Activated B cell treated with CpG ODN at 0.5 μM for 24 hours (primary cell): ENCODE measurements at regions of chr1 and their contacts with region 1.

Region 1: GRCh38 chr1:197924516-197925123 is 7.4 kb downstream of the LHX9 start:
- DNase-seq: no peak
- ATAC-seq: peak; percentile 76
- H3K4me3 Mint-ChIP-seq: no peak overlapping the region
- H3K27ac Mint-ChIP-seq: no peak overlapping the region
- H3K4me1 Mint-ChIP-seq: peaks cover 19% of the 10 kb centered on the region
- H3K27me3 Mint-ChIP-seq: peaks cover 67% of the 10 kb centered on the region
- CTCF ChIP-seq: no peak

Region 2: GRCh38 chr1:197521118-197521739 is 403.4 kb before region 1 on chr1:
- CTCF ChIA-PET with region 1: interaction called, 13 read pairs
- POLR2A ChIA-PET with region 1: no interaction called
- intact Hi-C with region 1: loop called (anchors 1 kb)
- DNase-seq: no peak
- ATAC-seq: peak; percentile 42
- H3K4me3 Mint-ChIP-seq: no peak overlapping the region
- H3K27ac Mint-ChIP-seq: no peak overlapping the region
- H3K4me1 Mint-ChIP-seq: no peaks in the 10 kb centered on the region
- H3K27me3 Mint-ChIP-seq: no peaks in the 10 kb centered on the region
- CTCF ChIP-seq: peak; percentile 47

Region 3: DNA sequence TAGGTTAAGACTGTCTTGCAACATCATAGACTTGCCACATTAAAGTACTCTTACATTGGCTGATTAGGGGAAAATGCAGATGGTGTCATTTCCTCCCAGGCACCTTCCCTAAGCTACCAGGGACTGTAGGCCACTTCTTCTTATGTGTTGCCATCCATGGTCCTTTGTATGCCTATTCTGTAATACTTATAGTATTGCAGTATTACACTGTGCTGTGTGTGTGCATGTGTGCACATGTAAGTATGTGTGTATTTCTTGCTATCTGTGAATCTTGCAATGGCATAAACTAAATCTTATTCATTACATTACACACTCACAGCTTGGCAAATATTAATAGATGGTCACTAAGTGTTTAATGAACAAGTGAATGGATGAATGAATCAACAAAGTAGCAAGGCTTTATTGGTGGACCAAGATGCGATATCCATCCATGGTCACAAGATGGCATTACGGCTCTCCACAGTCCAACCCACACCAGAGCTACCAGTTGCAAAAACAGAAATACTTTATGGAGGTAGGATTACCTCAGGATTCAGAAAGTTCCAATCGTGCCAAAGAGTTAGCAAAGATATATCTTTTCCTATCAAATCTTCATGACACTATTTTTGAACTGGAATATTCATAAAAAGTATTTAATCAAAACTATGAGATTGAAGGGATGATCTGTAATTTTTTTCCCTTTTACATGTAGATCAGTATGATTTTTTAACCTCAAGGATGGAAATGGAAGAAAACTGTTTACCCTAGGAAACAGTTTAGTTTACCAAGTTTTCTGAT is 309.5 kb before region 1 on chr1:
- CTCF ChIA-PET with region 1: interaction called, 10 read pairs
- POLR2A ChIA-PET with region 1: interaction called, 4 read pairs
- intact Hi-C with region 1: loop called (anchors 1 kb)
- DNase-seq: no peak
- ATAC-seq: no peak
- H3K4me3 Mint-ChIP-seq: no peak overlapping the region
- H3K27ac Mint-ChIP-seq: no peak overlapping the region
- H3K4me1 Mint-ChIP-seq: no peaks in the 10 kb centered on the region
- H3K27me3 Mint-ChIP-seq: no peaks in the 10 kb centered on the region
- CTCF ChIP-seq: no peak

Region 4: GRCh38 chr1:197868751-197869489 is 55.7 kb before region 1 on chr1:
- CTCF ChIA-PET with region 1: interaction called, 8 read pairs
- POLR2A ChIA-PET with region 1: no interaction called
- intact Hi-C with region 1: loop called (anchors 1 kb)
- DNase-seq: no peak
- ATAC-seq: peak; percentile 82
- H3K4me3 Mint-ChIP-seq: no peak overlapping the region
- H3K27ac Mint-ChIP-seq: no peak overlapping the region
- H3K4me1 Mint-ChIP-seq: no peaks in the 10 kb centered on the region
- H3K27me3 Mint-ChIP-seq: no peaks in the 10 kb centered on the region
- CTCF ChIP-seq: no peak

Region 5: GRCh38 chr1:198318085-198318484 is 393.5 kb after region 1 on chr1:
- CTCF ChIA-PET with region 1: no interaction called
- POLR2A ChIA-PET with region 1: no interaction called
- intact Hi-C with region 1: no loop called
- DNase-seq: no peak
- ATAC-seq: no peak
- H3K4me3 Mint-ChIP-seq: no peak overlapping the region
- H3K27ac Mint-ChIP-seq: no peak overlapping the region
- H3K4me1 Mint-ChIP-seq: no peaks in the 10 kb centered on the region
- H3K27me3 Mint-ChIP-seq: no peaks in the 10 kb centered on the region
- CTCF ChIP-seq: no peak

Region 6: GRCh38 chr1:198465201-198466144 is 540.9 kb after region 1 on chr1:
- CTCF ChIA-PET with region 1: interaction called, 3 read pairs
- POLR2A ChIA-PET with region 1: no interaction called
- intact Hi-C with region 1: loop called (anchors 2 kb)
- DNase-seq: no peak
- ATAC-seq: peak; percentile 49
- H3K4me3 Mint-ChIP-seq: no peak overlapping the region
- H3K27ac Mint-ChIP-seq: no peak overlapping the region
- H3K4me1 Mint-ChIP-seq: no peaks in the 10 kb centered on the region
- H3K27me3 Mint-ChIP-seq: no peaks in the 10 kb centered on the region
- CTCF ChIP-seq: no peak